CD8-positive, alpha-beta T cell (primary cell): ENCODE measurements at regions of chr22 and their contacts with region 1.

Region 1: DNA sequence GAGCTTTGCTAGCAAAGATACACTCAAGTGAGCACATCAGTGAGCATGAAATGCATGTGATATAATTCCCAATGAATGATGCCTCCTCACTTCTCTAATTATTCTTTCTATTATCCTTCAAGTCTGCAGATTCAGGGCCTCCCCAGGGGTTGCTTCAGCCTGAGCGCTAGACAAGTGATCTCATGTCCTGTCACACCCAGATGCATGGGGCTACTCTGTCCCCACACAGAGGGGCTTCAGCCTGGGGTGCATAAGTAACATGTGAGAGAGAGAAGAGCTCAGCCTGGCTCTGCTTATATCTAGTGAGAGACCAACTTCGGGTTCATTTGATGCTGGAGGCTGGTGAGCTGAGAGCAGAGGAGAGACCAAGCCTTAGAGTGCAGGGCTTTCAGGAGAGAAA is 85.2 kb downstream of the VPREB1 start:
- DNase-seq: no peak
- ATAC-seq: no peak
- H3K4me3 ChIP-seq: no peak overlapping the region
- H3K4me3 Mint-ChIP-seq: no peak overlapping the region
- H3K27ac ChIP-seq: no peak overlapping the region
- H3K27ac Mint-ChIP-seq: peak overlapping the region; percentile 5
- H3K4me1 ChIP-seq: no peaks in the 10 kb centered on the region
- H3K4me1 Mint-ChIP-seq: no peaks in the 10 kb centered on the region
- H3K27me3 ChIP-seq: peaks cover 0 to 3% of the 10 kb centered on the region in 2 experiments
- H3K27me3 Mint-ChIP-seq: peaks cover 47% of the 10 kb centered on the region
- CTCF ChIP-seq: no peak

Region 2: GRCh38 chr22:22342697-22343580 is 13.1 kb after region 1 on chr22:
- CTCF ChIA-PET with region 1: interaction called, 11 read pairs
- POLR2A ChIA-PET with region 1: no interaction called
- intact Hi-C with region 1: no loop called
- DNase-seq: peak; percentile 37 to 78 (median 60)
- ATAC-seq: peak; percentile 61
- H3K4me3 ChIP-seq: no peak overlapping the region
- H3K4me3 Mint-ChIP-seq: no peak overlapping the region
- H3K27ac ChIP-seq: no peak overlapping the region
- H3K27ac Mint-ChIP-seq: no peak overlapping the region
- H3K4me1 ChIP-seq: no peaks in the 10 kb centered on the region
- H3K4me1 Mint-ChIP-seq: no peaks in the 10 kb centered on the region
- H3K27me3 ChIP-seq: no peaks in the 10 kb centered on the region
- H3K27me3 Mint-ChIP-seq: no peaks in the 10 kb centered on the region
- CTCF ChIP-seq: peak; percentile 81